Activated B cell treated with CpG ODN at 0.5 μM for 24 hours (primary cell): ENCODE measurements at regions of chr14 and their contacts with region 1.

Region 1: DNA sequence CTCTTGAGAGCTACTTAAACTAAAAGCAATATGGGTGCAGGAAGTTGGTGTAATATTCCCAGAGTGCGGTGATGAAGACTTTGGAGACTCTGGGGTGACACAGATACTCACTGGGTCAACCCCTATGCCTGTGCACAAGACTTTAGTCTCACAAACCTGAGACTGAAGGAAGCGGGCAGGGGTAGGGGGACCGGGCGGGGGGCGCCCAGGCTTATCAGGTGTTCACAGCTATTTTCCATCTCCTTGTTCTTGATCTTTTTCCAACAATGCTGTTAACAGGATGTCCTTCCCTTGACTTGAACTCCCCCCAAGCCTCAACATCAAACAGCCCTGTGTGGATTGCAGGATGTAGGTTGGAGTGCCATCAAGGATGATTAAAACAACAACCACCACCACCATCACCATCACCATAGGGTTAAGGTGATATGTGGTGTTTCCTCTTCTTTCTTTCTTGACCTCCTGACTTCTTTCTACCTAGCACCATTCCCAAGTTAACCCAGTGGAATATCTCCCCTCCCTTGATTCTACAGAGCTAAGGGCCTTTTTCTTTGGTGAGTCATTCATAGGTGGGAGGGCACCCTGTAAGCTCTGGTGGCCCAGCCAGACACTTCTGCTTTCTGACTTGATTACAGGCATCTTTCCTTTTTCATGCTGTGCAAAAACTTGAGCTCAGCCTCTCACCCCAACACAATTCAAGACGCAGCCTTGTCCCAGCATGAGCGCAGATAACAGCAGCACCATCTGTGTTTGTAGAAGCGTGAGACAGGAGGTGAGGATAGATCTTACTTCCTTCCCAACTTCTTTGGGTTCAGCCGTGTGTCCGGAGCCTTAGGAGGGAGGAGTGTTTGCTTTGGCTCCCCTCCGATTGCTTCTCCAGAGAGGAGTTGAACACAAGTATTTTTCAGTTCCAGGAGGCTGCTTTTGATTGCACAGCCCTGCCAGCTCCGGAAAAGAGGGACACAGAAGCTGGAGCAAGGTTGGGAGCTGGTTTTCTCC is 26.7 kb downstream of the FLVCR2 start:
- DNase-seq: no peak
- ATAC-seq: no peak
- H3K4me3 Mint-ChIP-seq: no peak overlapping the region
- H3K27ac Mint-ChIP-seq: no peak overlapping the region
- H3K4me1 Mint-ChIP-seq: no peaks in the 10 kb centered on the region
- H3K27me3 Mint-ChIP-seq: peaks cover 3% of the 10 kb centered on the region
- CTCF ChIP-seq: no peak

Region 2: GRCh38 chr14:75279162-75279762 is 325.9 kb before region 1 on chr14:
- CTCF ChIA-PET with region 1: no interaction called
- POLR2A ChIA-PET with region 1: no interaction called
- intact Hi-C with region 1: no loop called
- DNase-seq: peak; percentile 53
- ATAC-seq: peak; percentile 7
- H3K4me3 Mint-ChIP-seq: peak overlapping the region; percentile 94
- H3K27ac Mint-ChIP-seq: peak overlapping the region; percentile 80
- H3K4me1 Mint-ChIP-seq: peaks cover 57% of the 10 kb centered on the region
- H3K27me3 Mint-ChIP-seq: peaks cover 15% of the 10 kb centered on the region
- CTCF ChIP-seq: no peak

Region 3: DNA sequence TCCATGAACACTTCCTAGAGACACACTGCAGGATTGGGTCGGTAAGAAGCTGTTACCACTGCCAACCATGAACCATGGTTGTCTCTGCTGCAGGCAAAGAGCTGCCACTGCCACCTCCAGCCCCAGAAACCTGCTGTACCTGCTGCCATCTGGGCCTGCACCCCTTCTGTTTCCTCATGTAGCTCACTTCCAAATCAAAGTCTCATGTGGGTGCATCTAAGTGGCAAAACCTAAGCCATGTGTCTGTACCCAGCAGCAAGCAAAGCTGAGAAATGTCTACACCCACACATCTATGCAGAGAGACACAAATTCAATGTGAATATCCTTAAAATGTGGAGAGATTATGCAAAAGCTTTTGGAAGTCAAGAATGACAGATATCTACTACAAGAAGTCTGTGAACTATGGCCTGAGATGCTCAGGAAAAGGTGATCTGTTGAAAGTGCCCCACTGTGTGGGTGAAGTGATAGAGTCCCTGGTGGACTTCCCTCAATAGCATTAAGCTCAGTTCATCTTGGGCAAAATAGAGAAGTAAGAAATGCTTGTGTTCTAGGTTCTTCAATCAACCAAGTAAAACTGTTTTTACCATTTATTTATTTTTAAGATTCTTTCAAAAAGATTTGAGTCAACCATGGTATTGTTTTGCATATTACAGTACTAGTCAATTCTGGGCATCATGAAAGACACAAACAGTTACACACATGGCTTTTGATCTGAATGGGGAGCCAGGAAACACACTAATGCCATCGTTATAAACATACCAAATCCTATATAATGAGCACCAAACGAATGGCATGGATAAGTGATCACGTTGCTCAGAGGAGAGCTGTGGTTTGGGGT is 262.2 kb before region 1 on chr14:
- CTCF ChIA-PET with region 1: no interaction called
- POLR2A ChIA-PET with region 1: no interaction called
- intact Hi-C with region 1: no loop called
- DNase-seq: no peak
- ATAC-seq: peak; percentile 71
- H3K4me3 Mint-ChIP-seq: no peak overlapping the region
- H3K27ac Mint-ChIP-seq: peak overlapping the region; percentile 64
- H3K4me1 Mint-ChIP-seq: peaks cover 25% of the 10 kb centered on the region
- H3K27me3 Mint-ChIP-seq: no peaks in the 10 kb centered on the region
- CTCF ChIP-seq: no peak

Region 4: GRCh38 chr14:75675265-75675960 is 70.3 kb after region 1 on chr14:
- CTCF ChIA-PET with region 1: no interaction called
- POLR2A ChIA-PET with region 1: interaction called, 12 read pairs
- intact Hi-C with region 1: no loop called
- DNase-seq: no peak
- ATAC-seq: no peak
- H3K4me3 Mint-ChIP-seq: no peak overlapping the region
- H3K27ac Mint-ChIP-seq: no peak overlapping the region
- H3K4me1 Mint-ChIP-seq: peaks cover 3% of the 10 kb centered on the region
- H3K27me3 Mint-ChIP-seq: no peaks in the 10 kb centered on the region
- CTCF ChIP-seq: no peak

Region 5: DNA sequence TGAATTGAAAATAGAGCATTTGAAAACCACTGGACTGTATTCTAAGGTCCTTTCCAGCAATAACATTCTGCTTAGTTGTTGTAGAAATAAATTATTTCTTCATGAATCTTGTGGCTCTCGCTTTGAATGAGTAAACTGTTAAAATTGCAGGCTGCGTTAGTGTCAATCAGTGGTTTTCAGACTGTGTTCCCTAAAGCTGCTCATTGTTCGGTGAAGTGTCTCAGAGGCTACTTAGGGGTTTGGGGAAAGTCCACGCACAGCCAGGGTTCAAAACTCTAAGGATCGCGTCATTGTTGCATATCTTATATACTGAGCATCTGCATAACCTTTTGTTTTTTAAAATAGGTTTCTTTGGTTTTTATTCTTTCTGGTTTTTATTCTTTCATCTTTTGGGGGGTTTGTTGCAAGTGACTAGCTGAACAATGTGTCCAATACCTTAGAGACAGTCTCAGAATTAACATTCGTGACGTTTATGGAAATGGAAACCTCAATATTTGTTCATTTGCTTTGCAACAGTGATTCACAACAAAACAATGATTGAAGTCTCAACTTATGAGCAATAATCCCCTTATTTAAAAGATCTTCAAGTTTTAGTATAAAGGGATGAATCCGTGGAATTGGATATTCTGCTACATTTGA is 164.0 kb after region 1 on chr14:
- CTCF ChIA-PET with region 1: no interaction called
- POLR2A ChIA-PET with region 1: no interaction called
- intact Hi-C with region 1: no loop called
- DNase-seq: no peak
- ATAC-seq: no peak
- H3K4me3 Mint-ChIP-seq: no peak overlapping the region
- H3K27ac Mint-ChIP-seq: no peak overlapping the region
- H3K4me1 Mint-ChIP-seq: no peaks in the 10 kb centered on the region
- H3K27me3 Mint-ChIP-seq: no peaks in the 10 kb centered on the region
- CTCF ChIP-seq: no peak